Naive thymus-derived CD4-positive, alpha-beta T cell (primary cell): ENCODE measurements at regions of chr20 and their contacts with region 1.

Region 1: GRCh38 chr20:3767427-3768341 is at the start of gene ADISSP:
- DNase-seq: peak; percentile 92 to 98 (median 94)
- ATAC-seq: peak; percentile 93
- H3K4me3 ChIP-seq: peak within 1 kb of the TSS; percentile 96
- H3K4me3 Mint-ChIP-seq: peak within 1 kb of the TSS; percentile 78 to 94 (median 90)
- H3K27ac ChIP-seq: peak within 1 kb of the TSS; percentile 100
- H3K27ac Mint-ChIP-seq: peak within 1 kb of the TSS; percentile 89 to 98 (median 94)
- H3K4me1 ChIP-seq: peaks cover 6 to 13% of the 10 kb centered on the region in 2 donors
- H3K4me1 Mint-ChIP-seq: peaks cover 11 to 29% (median 21%) of the 10 kb centered on the region in 7 donors
- H3K27me3 ChIP-seq: no peaks in the 10 kb centered on the region
- H3K27me3 Mint-ChIP-seq: peaks cover 0 to 6% (median 0%) of the 10 kb centered on the region in 5 donors
- total RNA-seq, gene ADISSP: 14.0 to 27.4 (median 18.4) TPM

Region 2: GRCh38 chr20:3407771-3408637 is 359.7 kb before region 1 on chr20:
- CTCF ChIA-PET with region 1: no interaction called
- POLR2A ChIA-PET with region 1: no interaction called
- intact Hi-C with region 1: loop called in 1 of 2 experiments (anchors 1 kb)
- DNase-seq: peak; percentile 53 to 74 (median 68)
- ATAC-seq: peak; percentile 80
- H3K4me3 ChIP-seq: peak overlapping the region; percentile 90
- H3K4me3 Mint-ChIP-seq: peak overlapping the region; percentile 94 to 100 (median 97)
- H3K27ac ChIP-seq: peak overlapping the region; percentile 70
- H3K27ac Mint-ChIP-seq: peak overlapping the region; percentile 83 to 97 (median 92)
- H3K4me1 ChIP-seq: no peaks in the 10 kb centered on the region
- H3K4me1 Mint-ChIP-seq: peaks cover 19 to 35% (median 29%) of the 10 kb centered on the region in 7 donors
- H3K27me3 ChIP-seq: no peaks in the 10 kb centered on the region
- H3K27me3 Mint-ChIP-seq: peaks cover 0 to 37% (median 0%) of the 10 kb centered on the region in 5 donors

Region 3: DNA sequence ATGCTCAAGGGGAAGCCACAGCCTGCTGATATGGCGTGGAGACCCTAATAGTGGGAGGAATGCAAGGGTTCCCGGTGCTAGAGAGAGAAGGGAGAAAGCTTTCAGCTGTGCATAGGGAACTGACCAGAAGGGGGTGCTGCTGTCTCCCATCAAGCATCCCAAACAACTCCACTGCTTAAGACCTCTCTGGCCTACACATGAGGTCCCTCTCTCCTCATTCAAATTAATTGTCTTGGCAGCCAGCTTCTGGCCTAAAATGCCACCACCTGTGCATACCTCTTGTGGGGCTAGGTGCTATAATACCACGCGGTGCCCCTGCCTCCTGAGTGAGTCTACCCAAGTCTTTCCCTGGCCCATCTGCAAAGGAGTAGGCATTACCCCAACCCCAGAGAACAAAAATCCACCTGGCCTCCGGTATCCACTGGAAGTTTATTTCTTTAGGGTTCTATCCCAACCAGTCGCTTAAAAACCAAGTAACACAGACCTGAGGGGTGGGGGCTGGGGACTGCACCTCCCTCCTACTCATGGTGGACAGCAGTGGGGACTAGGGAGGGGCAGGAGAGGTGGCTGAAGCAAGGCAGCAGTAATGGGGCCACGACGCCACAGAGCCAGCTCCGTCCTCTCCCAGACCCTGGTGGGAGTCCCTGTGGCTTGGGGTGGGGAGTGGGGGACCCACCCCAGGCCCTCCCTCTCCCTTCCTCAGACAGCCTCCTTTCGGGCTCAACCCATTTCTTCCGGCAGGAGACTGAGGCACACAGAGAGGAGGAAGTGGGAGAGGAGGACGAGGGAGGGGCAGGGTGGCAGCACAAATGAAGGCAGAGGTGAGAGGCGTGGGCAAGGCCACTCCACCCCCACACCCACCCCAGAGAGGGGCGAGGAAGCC is 14.3 kb before region 1 on chr20:
- CTCF ChIA-PET with region 1: interaction called, 24 read pairs
- POLR2A ChIA-PET with region 1: interaction called, 12 read pairs
- intact Hi-C with region 1: loop called (anchors 1 kb)
- DNase-seq: peak in 8 of 9 donors; percentile 33 to 64 (median 56)
- ATAC-seq: peak; percentile 82
- H3K4me3 ChIP-seq: no peak overlapping the region
- H3K4me3 Mint-ChIP-seq: peak overlapping the region in 5 of 10 donors; percentile 32 to 83 (median 41)
- H3K27ac ChIP-seq: no peak overlapping the region
- H3K27ac Mint-ChIP-seq: peak overlapping the region in 5 of 9 donors; percentile 15 to 86 (median 47)
- H3K4me1 ChIP-seq: peaks cover 0 to 5% of the 10 kb centered on the region in 2 donors
- H3K4me1 Mint-ChIP-seq: peaks cover 0 to 15% (median 4%) of the 10 kb centered on the region in 7 donors
- H3K27me3 ChIP-seq: no peaks in the 10 kb centered on the region
- H3K27me3 Mint-ChIP-seq: no peaks in the 10 kb centered on the region

Region 4: DNA sequence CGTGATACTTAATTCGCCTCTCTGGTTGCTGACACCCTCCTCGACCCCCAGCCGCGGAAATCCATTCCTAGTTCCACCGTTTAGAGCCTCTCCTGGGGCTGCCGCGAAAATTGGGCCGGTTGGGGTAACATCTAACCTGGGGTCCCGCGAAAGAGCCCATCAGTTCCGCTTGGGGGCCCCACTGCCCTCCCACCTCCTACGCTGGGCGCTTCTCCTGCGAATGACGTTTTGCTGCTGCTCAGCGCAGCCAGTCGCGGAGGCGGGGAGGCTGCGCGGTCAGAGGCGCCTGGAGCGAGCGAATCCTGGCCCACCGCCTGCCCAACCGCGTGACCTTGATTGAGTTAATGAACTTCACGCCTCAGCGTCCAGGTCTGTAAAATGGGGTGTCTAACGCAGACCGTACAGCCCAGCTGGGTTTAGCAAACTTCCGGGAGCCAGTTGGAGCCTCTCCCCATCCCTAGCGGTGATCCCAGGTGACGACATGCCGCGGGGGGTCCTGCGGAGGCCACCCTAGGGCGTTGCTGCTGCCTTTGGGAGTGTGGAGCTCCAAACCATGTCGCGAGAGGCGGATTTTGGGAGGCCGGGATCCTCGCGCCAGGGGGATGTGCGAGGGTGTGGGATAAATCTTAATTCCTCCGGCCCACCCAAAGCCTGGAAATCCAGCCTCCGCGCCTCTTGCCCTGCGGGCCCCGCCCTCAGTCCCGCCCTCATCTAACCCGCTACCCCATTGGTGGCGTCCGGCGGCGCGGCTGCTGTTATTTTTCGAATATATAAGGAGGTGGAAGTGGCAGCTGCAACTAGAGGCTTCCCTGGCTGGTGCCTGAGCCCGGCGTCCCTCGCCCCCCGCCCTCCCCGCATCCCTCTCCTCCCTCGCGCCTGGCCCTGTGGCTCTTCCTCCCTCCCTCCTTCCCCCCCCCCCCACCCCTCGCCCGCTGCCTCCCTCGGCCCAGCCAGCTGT is 28.1 kb after region 1 on chr20 and contains the start of gene CDC25B:
- CTCF ChIA-PET with region 1: no interaction called
- POLR2A ChIA-PET with region 1: interaction called, 12 read pairs
- intact Hi-C with region 1: loop called (anchors 1 kb)
- DNase-seq: peak; percentile 64 to 89 (median 84)
- ATAC-seq: peak; percentile 90
- H3K4me3 ChIP-seq: peak within 1 kb of the TSS; percentile 90
- H3K4me3 Mint-ChIP-seq: peak within 1 kb of the TSS; percentile 90 to 99 (median 98)
- H3K27ac ChIP-seq: peak within 1 kb of the TSS; percentile 95
- H3K27ac Mint-ChIP-seq: peak within 1 kb of the TSS; percentile 81 to 99 (median 97)
- H3K4me1 ChIP-seq: peaks cover 27 to 39% of the 10 kb centered on the region in 2 donors
- H3K4me1 Mint-ChIP-seq: peaks cover 24 to 43% (median 39%) of the 10 kb centered on the region in 7 donors
- H3K27me3 ChIP-seq: no peaks in the 10 kb centered on the region
- H3K27me3 Mint-ChIP-seq: peaks cover 0 to 7% (median 0%) of the 10 kb centered on the region in 5 donors
- total RNA-seq, gene CDC25B: 166 to 392 (median 281) TPM

Region 5: GRCh38 chr20:3846740-3847428 is 79.2 kb after region 1 on chr20 and contains the start of gene MAVS:
- CTCF ChIA-PET with region 1: no interaction called
- POLR2A ChIA-PET with region 1: interaction called, 3 read pairs
- intact Hi-C with region 1: loop called (anchors 1 to 5 kb)
- DNase-seq: peak; percentile 76 to 93 (median 82)
- ATAC-seq: peak; percentile 100
- H3K4me3 ChIP-seq: peak within 1 kb of the TSS; percentile 86
- H3K4me3 Mint-ChIP-seq: peak within 1 kb of the TSS; percentile 85 to 93 (median 90)
- H3K27ac ChIP-seq: peak within 1 kb of the TSS; percentile 96
- H3K27ac Mint-ChIP-seq: peak within 1 kb of the TSS; percentile 59 to 95 (median 90)
- H3K4me1 ChIP-seq: peaks cover 0 to 10% of the 10 kb centered on the region in 2 donors
- H3K4me1 Mint-ChIP-seq: peaks cover 16 to 30% (median 27%) of the 10 kb centered on the region in 7 donors
- H3K27me3 ChIP-seq: no peaks in the 10 kb centered on the region
- H3K27me3 Mint-ChIP-seq: no peaks in the 10 kb centered on the region
- total RNA-seq, gene MAVS: 23.3 to 49.9 (median 41.5) TPM

Region 6: GRCh38 chr20:4014031-4014474 is 246.4 kb after region 1 on chr20:
- CTCF ChIA-PET with region 1: interaction called, 3 read pairs
- POLR2A ChIA-PET with region 1: no interaction called
- intact Hi-C with region 1: loop called in 1 of 2 experiments (anchors 5 kb)
- DNase-seq: peak in 7 of 9 donors; percentile 18 to 54 (median 35)
- ATAC-seq: no peak
- H3K4me3 ChIP-seq: no peak overlapping the region
- H3K4me3 Mint-ChIP-seq: peak overlapping the region; percentile 72 to 95 (median 89)
- H3K27ac ChIP-seq: no peak overlapping the region
- H3K27ac Mint-ChIP-seq: peak overlapping the region; percentile 28 to 97 (median 78)
- H3K4me1 ChIP-seq: peaks cover 8 to 9% of the 10 kb centered on the region in 2 donors
- H3K4me1 Mint-ChIP-seq: peaks cover 26 to 52% (median 35%) of the 10 kb centered on the region in 7 donors
- H3K27me3 ChIP-seq: no peaks in the 10 kb centered on the region
- H3K27me3 Mint-ChIP-seq: no peaks in the 10 kb centered on the region

Region 7: DNA sequence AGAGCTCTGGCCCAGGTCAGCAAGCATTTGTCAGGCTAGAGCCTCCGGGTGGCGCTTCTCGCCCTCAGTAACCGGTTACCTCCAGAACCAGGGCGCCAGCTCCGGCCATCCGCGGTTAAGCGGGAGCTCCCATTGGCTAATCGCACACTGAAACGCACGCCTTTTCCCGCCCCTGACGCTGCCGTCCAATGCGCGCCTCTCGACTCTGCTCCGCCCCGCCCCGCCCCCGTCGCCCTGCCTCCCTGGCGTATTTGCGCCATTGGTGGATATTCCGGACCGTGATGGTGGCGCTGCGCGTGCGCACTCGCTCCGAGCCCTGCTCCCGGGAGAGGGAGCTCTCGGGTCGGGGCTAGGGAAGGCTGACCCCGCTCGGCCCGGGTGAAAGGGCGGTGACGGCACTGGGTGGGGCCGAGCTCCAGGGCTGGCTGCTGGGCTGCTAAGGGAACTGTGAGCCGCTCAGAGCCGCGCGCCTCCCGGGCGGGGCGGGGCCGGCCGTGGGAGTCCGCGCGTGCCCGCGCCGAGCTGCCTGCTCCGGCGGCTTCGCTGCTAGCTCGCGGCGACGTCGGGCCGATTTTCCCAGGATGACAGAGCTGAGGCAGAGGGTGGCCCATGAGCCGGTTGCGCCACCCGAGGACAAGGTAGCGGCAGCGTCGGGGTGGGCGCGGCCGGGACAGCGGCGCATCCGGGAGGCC is 1359.0 kb after region 1 on chr20 and contains the start of gene CDS2:
- CTCF ChIA-PET with region 1: no interaction called
- POLR2A ChIA-PET with region 1: no interaction called
- intact Hi-C with region 1: loop called (anchors 5 to 10 kb)
- DNase-seq: peak; percentile 99
- ATAC-seq: peak; percentile 93
- H3K4me3 ChIP-seq: peak within 1 kb of the TSS; percentile 64
- H3K4me3 Mint-ChIP-seq: peak within 1 kb of the TSS; percentile 87 to 96 (median 93)
- H3K27ac ChIP-seq: peak within 1 kb of the TSS; percentile 99
- H3K27ac Mint-ChIP-seq: peak within 1 kb of the TSS; percentile 85 to 99 (median 94)
- H3K4me1 ChIP-seq: peaks cover 19 to 27% of the 10 kb centered on the region in 2 donors
- H3K4me1 Mint-ChIP-seq: peaks cover 15 to 58% (median 41%) of the 10 kb centered on the region in 7 donors
- H3K27me3 ChIP-seq: no peaks in the 10 kb centered on the region
- H3K27me3 Mint-ChIP-seq: no peaks in the 10 kb centered on the region
- total RNA-seq, gene CDS2: 48.3 to 58.3 (median 57.8) TPM